GM12878 (cell line): ENCODE measurements at regions of chr2 and their contacts with region 1.

Region 1: DNA sequence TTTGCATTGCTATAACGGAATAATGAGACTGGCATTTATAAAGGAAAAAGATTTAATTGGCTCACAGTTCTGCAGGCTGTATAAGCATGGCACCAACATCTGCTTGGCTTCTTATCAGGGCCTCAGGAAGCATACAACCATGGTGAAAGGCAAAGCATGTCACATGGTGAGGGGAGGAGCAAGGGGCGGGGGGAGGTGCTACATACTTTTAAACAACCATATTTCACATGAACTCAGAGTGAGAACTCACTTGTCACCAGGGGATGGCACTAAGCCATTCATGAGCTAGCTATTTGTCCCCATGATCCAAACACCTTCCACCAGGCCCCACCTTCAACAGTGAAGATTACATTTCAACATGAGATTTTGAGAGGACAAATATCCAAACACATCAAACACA is 188.7 kb downstream of the MBD5 start:
- DNase-seq: no peak
- ATAC-seq: peak; percentile 79
- H3K4me3 ChIP-seq: no peak overlapping the region
- H3K27ac ChIP-seq: no peak overlapping the region
- H3K4me1 ChIP-seq: no peaks in the 10 kb centered on the region
- H3K27me3 ChIP-seq: no peaks in the 10 kb centered on the region
- CTCF ChIP-seq: no peak
- EP300 ChIP-seq: no peak
- POLR2A ChIP-seq: no peak
- RAD21 ChIP-seq: no peak

Region 2: GRCh38 chr2:148231858-148232257 is 22.3 kb after region 1 on chr2:
- CTCF ChIA-PET with region 1: no interaction called
- POLR2A ChIA-PET with region 1: no interaction called
- RAD21 ChIA-PET with region 1: no interaction called
- SMC1A ChIA-PET with region 1: no interaction called
- in situ Hi-C with region 1: no loop called
- intact Hi-C with region 1: no loop called
- DNase-seq: no peak
- ATAC-seq: no peak
- H3K4me3 ChIP-seq: no peak overlapping the region
- H3K27ac ChIP-seq: no peak overlapping the region
- H3K4me1 ChIP-seq: no peaks in the 10 kb centered on the region
- H3K27me3 ChIP-seq: no peaks in the 10 kb centered on the region
- CTCF ChIP-seq: no peak
- EP300 ChIP-seq: no peak
- POLR2A ChIP-seq: no peak
- RAD21 ChIP-seq: no peak

Region 3: GRCh38 chr2:148259674-148260073 is 50.1 kb after region 1 on chr2:
- CTCF ChIA-PET with region 1: no interaction called
- POLR2A ChIA-PET with region 1: no interaction called
- RAD21 ChIA-PET with region 1: no interaction called
- SMC1A ChIA-PET with region 1: no interaction called
- in situ Hi-C with region 1: no loop called
- intact Hi-C with region 1: loop called (anchors 1 kb)
- DNase-seq: no peak
- ATAC-seq: no peak
- H3K4me3 ChIP-seq: no peak overlapping the region
- H3K27ac ChIP-seq: no peak overlapping the region
- H3K4me1 ChIP-seq: no peaks in the 10 kb centered on the region
- H3K27me3 ChIP-seq: no peaks in the 10 kb centered on the region
- CTCF ChIP-seq: no peak
- EP300 ChIP-seq: no peak
- POLR2A ChIP-seq: no peak
- RAD21 ChIP-seq: no peak